ENCODE measurements at regions of chr14 and their contacts with region 1.

Region 1: DNA sequence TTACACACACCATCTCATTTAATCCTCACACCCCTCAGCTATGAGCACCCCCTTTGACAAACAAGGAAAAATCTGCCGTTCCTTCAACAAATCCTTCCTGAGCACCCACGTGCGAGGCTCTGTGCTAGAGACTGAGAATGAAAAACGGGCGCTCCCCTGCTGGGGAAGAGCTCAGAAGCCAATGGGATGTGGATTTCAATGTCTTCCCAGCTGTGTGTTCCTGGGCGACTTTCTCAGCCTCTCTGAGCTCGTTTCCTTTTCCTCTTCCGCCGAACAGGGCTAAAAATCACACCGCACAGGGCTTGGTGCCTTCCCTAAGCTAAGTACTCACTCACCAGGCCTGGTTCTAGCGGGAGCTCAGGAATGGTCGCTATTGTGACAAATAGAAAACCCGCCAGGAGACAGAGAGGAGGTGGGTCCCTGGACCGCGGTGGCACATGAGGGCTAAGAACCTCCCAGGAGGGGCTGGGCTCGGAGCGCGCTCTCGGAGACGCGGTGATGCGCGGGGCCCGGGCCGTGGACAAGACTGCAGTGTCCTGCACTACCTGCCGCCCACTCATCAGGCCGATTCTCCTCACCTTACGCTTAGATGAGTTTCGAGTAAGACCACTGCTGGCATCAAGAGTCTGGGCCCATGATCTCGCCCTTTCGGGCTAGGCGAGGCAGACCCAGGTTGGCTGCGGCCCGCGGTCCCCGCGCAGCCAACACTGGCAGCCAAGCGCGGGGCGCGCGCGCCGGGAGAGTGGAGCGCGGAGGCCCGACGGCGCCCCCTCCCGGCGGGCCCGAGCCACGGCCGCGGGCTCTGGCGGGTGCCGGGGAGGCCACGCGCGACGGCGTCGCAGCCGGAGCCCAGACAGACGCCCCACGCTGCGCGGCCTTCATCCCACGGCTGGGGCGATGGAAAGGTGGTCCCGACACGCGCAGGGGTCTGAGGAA is 17.0 kb downstream of the ZDHHC22 start:
- DNase-seq: peak in 1 of 2 experiments; percentile 48
- ATAC-seq: peak; percentile 76 to 90
- H3K4me3 ChIP-seq: peak overlapping the region; percentile 47
- H3K27ac ChIP-seq: peak overlapping the region; percentile 62 to 84
- H3K4me1 ChIP-seq: peaks cover 15% of the 10 kb centered on the region; the same call in 2 of the 3 replicates
- CTCF ChIP-seq: peak; percentile 92
- EP300 ChIP-seq: no peak
- POLR2A ChIP-seq: peak; percentile 60
- RAD21 ChIP-seq: peak in 1 of 2 experiments; percentile 51; a peak in 2 of 5 replicates

Region 2: DNA sequence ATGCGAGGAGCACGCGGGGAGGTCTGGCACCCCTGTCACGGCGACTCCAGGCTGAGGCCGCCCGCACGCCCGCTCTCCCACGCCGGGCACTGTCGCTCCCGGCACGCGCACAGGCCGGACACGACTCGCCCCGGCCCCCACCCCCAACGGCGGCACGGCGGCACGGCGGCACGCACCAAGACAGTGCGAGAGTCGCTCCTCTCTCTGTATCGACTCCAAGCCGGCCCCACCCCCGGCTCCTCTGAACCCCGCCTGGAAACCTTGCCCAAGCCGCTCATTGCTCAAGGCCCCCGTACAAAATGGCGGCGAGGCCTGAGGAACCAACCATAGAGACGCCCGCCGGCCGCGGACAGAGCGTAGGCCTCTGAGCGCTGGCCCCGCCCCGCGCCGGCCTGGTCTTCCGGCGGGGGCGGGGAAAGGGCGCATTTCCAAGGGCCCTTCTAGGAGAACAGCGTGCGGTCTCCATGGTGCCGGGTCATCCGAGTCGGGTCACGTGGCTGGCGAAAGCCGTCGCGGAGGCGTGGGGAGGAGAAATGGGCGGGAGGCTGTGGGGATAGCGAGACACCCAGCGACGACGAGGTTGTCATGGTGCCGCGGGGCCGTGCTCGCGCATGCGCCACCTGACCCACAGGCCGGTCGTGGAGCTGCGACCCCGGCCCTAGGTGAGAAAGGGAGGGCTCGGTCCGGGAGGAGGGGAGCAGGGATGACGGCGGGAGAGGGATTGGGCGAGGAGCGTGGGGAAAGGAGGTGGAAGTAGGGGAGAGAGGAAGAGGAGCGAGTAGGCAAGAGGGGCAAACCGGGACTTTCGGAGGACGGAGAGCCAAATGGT is 26.7 kb before region 1 on chr14 and contains the start of gene CIPC:
- CTCF ChIA-PET with region 1: interaction called, 11 read pairs
- POLR2A ChIA-PET with region 1: interaction called, 4 read pairs
- DNase-seq: peak; percentile 97 to 99
- ATAC-seq: peak; percentile 91 to 96
- H3K4me3 ChIP-seq: peak within 1 kb of the TSS; percentile 92
- H3K27ac ChIP-seq: peak within 1 kb of the TSS; percentile 94 to 96
- H3K4me1 ChIP-seq: peaks cover 19% of the 10 kb centered on the region
- CTCF ChIP-seq: no peak
- EP300 ChIP-seq: peak in 1 of 2 experiments; percentile 35; a peak in 1 of 5 replicates
- POLR2A ChIP-seq: peak; percentile 87
- RAD21 ChIP-seq: no peak
- polyA plus RNA-seq, gene CIPC: 13.9 and 15.2 TPM in 2 replicates

Region 3: DNA sequence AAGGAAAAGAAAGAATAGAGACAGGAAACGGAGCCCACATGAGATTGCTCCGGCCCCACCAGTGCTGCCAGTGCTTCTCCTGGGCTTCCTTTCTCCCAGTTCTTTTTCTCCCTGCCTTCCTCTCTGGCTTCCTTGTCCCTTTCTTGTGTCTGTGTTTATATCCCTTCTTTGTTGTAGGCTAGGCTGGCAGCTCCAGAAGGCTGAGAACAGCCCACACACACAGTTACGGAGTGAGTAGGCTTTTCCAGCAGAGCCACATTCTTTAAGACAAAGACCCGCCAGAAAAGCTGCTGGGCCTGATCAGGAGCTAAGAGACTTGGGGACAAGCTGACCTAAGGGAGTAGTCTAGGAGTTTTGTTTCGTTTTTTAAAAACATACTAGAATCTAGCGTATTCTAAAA is 13.6 kb before region 1 on chr14:
- CTCF ChIA-PET with region 1: interaction called, 60 read pairs
- POLR2A ChIA-PET with region 1: interaction called, 3 read pairs
- DNase-seq: no peak
- ATAC-seq: no peak
- H3K4me3 ChIP-seq: no peak overlapping the region
- H3K27ac ChIP-seq: no peak overlapping the region
- H3K4me1 ChIP-seq: no peaks in the 10 kb centered on the region
- CTCF ChIP-seq: no peak
- EP300 ChIP-seq: no peak
- POLR2A ChIP-seq: no peak
- RAD21 ChIP-seq: no peak

Region 4: DNA sequence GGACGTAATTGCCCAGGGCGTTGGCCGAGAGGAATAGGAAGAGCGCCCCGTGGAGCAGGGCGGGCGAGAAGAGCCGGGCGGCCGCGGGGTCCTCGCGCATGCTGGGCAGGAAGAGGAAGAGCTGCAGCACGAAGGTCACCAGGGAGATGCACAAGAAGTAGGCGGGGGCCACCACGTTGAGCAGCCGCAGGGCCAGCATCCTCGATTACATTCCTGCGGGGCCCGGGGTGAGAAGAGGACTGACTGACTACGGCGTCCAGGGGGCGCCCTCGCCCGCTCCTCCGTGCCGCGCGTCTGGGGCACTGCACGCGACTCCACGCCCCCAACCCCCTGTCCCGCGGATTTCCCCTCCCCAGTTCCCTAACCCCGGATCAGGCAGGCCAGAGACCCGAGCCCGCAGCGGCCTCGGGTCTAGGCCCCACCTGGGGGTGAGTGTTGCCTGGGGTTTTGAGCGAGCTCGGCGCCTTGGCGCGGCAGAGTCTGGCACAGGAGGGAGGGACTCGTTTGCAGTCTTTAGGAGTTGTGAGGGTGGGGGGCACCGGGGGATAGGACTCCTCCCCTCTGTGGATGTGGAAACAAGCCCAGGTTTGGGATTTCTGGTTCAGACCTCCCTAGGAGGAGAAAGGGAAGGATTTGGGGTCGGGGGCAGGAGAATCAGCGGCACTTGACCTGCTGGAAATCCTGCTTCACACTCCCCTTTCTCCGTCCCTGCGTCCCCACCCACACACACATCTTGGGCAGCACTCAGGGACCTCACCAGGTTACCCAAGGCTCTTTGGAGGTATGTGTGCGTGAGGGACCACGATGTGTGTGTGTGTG is 15.1 kb after region 1 on chr14:
- CTCF ChIA-PET with region 1: interaction called, 52 read pairs
- POLR2A ChIA-PET with region 1: no interaction called
- DNase-seq: peak; percentile 59 to 89
- ATAC-seq: peak; percentile 67 to 87
- H3K4me3 ChIP-seq: peak overlapping the region; percentile 58
- H3K27ac ChIP-seq: peak overlapping the region in 1 of 2 experiments; percentile 43; a peak in 1 of 6 replicates
- H3K4me1 ChIP-seq: peaks cover 9% of the 10 kb centered on the region
- CTCF ChIP-seq: peak; percentile 70
- EP300 ChIP-seq: no peak
- POLR2A ChIP-seq: no peak
- RAD21 ChIP-seq: peak; percentile 55 to 59

Measured in A549 (cell line).